ENCODE measurements at regions of chr17 and their contacts with region 1.

Region 1: DNA sequence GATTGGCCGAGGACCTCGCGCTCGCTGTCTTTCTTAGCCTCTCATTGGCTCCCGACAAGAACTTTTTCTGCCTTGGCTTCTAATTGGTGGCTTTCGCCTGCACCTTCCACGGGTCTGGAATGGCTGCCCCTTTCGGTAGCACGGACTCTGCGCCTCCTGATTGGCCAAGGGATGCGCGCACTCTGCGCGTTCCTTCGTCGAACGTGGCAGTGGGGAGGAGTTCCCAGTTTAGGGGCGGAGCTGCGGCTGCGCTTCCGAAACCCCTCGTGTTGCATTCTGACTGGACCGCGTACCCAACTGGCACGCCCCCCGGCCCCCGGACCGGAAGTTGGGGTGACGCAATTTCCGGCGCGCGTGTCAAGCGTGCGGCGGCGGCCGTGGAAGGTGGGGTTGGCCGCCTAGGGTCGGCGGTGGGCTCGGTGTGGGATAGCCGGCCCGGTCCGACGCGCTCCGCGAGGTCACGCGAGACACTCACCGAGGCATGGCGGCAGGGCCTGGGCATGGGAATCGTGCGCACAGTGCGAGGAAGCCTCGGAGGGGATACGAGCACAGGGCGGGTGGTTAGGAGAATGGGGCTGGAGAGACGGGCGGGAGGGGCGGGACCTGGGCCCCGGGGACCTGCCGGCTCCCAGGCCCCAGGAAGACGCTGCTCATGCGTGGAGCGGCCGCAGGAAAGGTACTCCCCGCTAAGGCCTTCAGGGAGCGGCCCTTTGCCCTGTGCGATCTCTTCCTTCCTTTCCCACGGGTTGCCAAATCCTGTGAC is 602 bp upstream of the P4HB start:
- DNase-seq: peak; percentile 99
- H3K4me3 Mint-ChIP-seq: peak overlapping the region; percentile 91
- H3K27ac Mint-ChIP-seq: peak overlapping the region; percentile 94
- H3K4me1 Mint-ChIP-seq: peaks cover 31% of the 10 kb centered on the region
- H3K27me3 Mint-ChIP-seq: peaks cover 3% of the 10 kb centered on the region

Region 2: DNA sequence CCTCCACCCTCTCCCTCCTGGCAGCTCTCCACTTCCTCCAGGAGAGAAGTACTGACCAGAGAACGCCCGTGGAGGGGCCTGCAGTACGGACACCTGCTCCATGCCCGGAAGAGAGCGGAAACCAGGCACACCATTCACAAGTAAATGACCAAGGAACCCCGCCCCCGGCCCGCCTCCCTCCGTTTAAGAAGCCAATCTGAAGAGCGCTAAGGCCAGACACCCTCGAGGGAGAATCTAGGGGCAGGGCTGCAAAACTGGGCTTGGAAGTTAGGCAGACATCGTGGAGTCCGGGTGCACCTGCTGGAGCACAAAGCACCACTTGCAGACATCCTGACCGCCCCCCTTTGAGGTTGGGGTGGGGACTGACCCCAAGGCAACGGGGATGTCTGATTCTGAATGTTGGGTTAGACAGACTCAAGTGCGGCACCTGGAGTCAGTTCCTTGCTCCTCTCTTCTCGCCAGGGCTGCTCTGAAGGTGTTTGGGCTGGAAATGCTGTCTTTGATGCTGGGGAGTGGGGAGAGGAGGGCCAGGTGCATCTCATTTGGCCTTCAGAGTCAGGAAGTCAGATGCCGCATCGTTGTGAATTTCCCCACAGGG is 307.8 kb before region 1 on chr17:
- intact Hi-C with region 1: loop called (anchors 10 kb)
- DNase-seq: peak; percentile 67
- H3K4me3 Mint-ChIP-seq: peak overlapping the region; percentile 92
- H3K27ac Mint-ChIP-seq: peak overlapping the region; percentile 91
- H3K4me1 Mint-ChIP-seq: peaks cover 41% of the 10 kb centered on the region
- H3K27me3 Mint-ChIP-seq: no peaks in the 10 kb centered on the region

Region 3: GRCh38 chr17:81683584-81684237 is 177.2 kb before region 1 on chr17 and contains the starts of genes ARL16 and HGS:
- intact Hi-C with region 1: loop called (anchors 2 kb)
- DNase-seq: peak; percentile 98
- H3K4me3 Mint-ChIP-seq: peak within 1 kb of the TSS; percentile 97
- H3K27ac Mint-ChIP-seq: peak within 1 kb of the TSS; percentile 95
- H3K4me1 Mint-ChIP-seq: peaks cover 22% of the 10 kb centered on the region
- H3K27me3 Mint-ChIP-seq: no peaks in the 10 kb centered on the region
- total RNA-seq, gene ARL16: 37.6 and 40.0 TPM in 2 replicates
- total RNA-seq, gene HGS: 133 and 144 TPM in 2 replicates

Region 4: GRCh38 chr17:81733507-81734404 is 127.2 kb before region 1 on chr17:
- intact Hi-C with region 1: loop called (anchors 1 kb)
- DNase-seq: peak; percentile 62
- H3K4me3 Mint-ChIP-seq: no peak overlapping the region
- H3K27ac Mint-ChIP-seq: no peak overlapping the region
- H3K4me1 Mint-ChIP-seq: peaks cover 6% of the 10 kb centered on the region
- H3K27me3 Mint-ChIP-seq: peaks cover 11% of the 10 kb centered on the region

Region 5: GRCh38 chr17:81890447-81891299 is 29.7 kb after region 1 on chr17:
- intact Hi-C with region 1: loop called (anchors 1 kb)
- DNase-seq: peak; percentile 29
- H3K4me3 Mint-ChIP-seq: peak overlapping the region; percentile 92
- H3K27ac Mint-ChIP-seq: peak overlapping the region; percentile 87
- H3K4me1 Mint-ChIP-seq: peaks cover 13% of the 10 kb centered on the region
- H3K27me3 Mint-ChIP-seq: no peaks in the 10 kb centered on the region

Region 6: DNA sequence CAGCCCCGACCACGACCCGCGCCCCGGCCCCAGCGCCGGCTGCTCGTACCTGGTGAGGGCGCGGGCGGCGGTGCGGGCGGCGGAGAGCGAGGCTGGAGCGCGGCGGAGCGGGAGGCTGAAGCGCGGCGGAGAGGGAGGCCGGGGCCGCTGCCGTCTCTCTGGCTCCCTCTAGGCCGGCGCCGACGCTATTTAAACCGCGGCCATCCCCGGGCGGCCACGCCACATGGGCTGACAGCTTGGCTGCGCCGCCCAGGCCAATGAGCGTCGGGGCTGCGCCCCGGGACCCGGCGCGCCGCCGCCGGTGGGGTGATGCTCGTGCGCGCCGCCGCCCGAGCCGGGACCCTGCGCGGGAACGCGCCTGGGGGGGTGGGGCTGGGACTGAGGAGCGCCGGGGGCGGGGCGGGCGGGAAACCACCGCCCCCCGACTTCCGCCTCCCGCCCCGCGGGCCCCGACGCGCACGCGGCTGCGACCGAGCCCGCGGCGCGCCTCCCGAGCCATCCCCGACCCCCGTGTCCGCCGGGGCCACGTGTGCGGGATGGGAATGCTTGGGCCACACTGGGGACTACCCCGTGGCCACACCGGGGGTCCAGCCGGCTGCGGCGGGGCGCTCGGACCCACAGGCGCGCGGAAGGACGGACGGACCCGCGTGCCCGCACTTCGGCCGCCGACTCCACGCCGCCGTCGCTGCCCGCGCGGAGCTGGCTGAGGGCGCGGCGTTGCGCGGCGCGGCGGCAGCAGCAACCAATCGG is 237.3 kb after region 1 on chr17 and contains the start of gene FASN:
- intact Hi-C with region 1: loop called (anchors 2 kb)
- DNase-seq: peak; percentile 90
- H3K4me3 Mint-ChIP-seq: peak within 1 kb of the TSS; percentile 82
- H3K27ac Mint-ChIP-seq: peak within 1 kb of the TSS; percentile 72
- H3K4me1 Mint-ChIP-seq: no peaks in the 10 kb centered on the region
- H3K27me3 Mint-ChIP-seq: no peaks in the 10 kb centered on the region
- total RNA-seq, gene FASN: 415 and 421 TPM in 2 replicates

Measured in activated T-helper 1 cell treated with anti-CD3 and anti-CD28 coated beads, Interleukin-12 subunit alpha, Interleukin-12 subunit beta, Interleukin-2, Interleukin-4 antibody, amounts not matched to agents 30 ng/mL and 10 ng/mL and 1 ng/mL, durations not matched to agents 14 hours and 24 hours and 36 hours (primary cell).